AG04450 (cell line): ENCODE measurements at regions of chr1 and their contacts with region 1.

Region 1: DNA sequence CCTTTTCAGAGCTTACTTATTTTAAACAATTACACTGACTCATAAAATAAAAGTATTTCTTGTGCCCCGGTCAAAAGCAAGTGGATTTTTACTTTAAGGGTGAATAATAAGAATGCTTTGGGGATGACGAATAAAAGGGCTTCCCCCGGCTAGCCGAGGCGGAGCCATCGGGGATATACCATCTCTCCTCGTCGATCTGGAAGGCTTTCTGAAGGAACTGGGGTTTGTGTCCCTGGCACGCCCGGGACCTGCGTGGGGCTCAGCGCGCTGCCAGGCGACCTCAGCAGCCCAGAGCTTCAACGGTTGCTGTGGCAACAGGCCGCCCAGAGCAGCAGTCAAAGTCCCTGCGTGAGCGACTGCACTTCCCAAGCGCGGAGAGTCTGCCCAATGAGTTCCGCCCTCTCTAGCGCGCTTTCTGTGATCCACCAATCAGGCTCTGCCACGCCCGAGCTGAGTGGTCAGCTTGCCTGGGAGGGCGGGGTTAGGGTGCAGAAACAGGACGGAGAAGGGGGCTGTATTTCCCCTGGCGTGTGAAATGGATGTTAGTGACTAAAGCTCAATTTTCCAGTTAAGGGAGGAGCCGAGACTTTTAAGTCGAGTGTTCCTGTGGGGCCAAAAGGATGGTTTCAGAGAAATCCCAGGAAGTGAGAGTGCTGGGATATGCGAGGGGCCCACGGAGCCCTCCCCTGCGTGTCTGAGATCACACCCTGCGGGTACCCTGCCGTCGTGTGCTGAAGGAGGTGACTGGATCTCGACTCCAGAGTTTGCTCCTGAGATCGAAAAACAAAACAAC is 33.0 kb upstream of the MGST3 start:
- DNase-seq: peak; percentile 94
- H3K4me3 ChIP-seq: peak overlapping the region; percentile 69
- H3K27ac ChIP-seq: peak overlapping the region; percentile 92
- H3K27me3 ChIP-seq: peaks cover 14% of the 10 kb centered on the region
- CTCF ChIP-seq: no peak

Region 2: GRCh38 chr1:165575468-165576099 is 22.5 kb before region 1 on chr1:
- CTCF ChIA-PET with region 1: interaction called, 19 read pairs
- POLR2A ChIA-PET with region 1: no interaction called
- DNase-seq: no peak
- H3K4me3 ChIP-seq: no peak overlapping the region
- H3K27ac ChIP-seq: no peak overlapping the region
- H3K27me3 ChIP-seq: no peaks in the 10 kb centered on the region
- CTCF ChIP-seq: no peak

Region 3: DNA sequence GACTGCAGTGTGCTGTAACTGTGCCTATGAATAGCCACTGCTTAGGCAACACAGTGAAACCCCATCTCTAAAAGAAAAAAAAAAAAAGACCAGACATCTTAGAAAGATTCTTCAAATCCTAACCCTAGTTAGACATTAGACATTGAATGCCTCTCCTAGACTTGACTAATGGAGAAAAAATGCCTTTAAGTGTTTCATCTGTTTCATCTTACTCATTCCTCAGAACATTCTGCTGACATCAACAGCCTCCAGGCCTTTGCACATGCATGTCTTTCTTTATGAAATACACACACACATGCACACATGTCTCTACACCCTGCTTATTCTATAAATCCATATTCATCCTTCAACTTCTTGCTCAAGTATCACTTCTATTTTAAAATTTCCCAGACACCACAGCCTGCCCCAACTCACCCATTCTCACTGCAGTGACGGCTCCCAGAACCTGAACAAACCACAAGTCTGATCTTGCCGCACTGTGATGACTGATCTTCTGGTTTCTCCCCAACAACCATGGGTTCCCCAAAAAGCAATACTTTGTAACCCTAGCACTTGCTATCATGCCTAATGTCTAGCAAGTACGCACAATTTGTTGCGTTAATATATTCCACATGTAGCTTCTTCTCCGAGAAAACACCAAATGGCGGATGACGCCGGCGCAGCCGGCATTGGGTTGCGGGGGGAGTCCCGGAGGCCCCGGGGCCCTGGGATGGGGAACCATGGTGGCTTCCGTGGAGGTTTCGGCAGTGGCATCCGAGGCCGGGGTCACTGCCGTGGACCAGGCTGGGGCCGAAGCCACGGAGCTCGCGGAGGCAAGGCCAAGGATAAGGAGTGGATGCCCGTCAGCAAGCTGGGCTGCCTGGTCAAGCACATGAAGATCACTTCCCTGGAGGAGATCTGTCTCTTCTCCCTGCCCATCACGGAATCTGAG is 16.9 kb before region 1 on chr1:
- CTCF ChIA-PET with region 1: interaction called, 14 read pairs
- POLR2A ChIA-PET with region 1: no interaction called
- DNase-seq: no peak
- H3K4me3 ChIP-seq: no peak overlapping the region
- H3K27ac ChIP-seq: no peak overlapping the region
- H3K27me3 ChIP-seq: no peaks in the 10 kb centered on the region
- CTCF ChIP-seq: no peak

Region 4: GRCh38 chr1:165960136-165960535 is 362.1 kb after region 1 on chr1:
- CTCF ChIA-PET with region 1: no interaction called
- POLR2A ChIA-PET with region 1: no interaction called
- DNase-seq: no peak
- H3K4me3 ChIP-seq: no peak overlapping the region
- H3K27ac ChIP-seq: no peak overlapping the region
- H3K27me3 ChIP-seq: no peaks in the 10 kb centered on the region
- CTCF ChIP-seq: no peak